CD8-positive, alpha-beta T cell (primary cell): ENCODE measurements at regions of chr17 and their contacts with region 1.

Region 1: DNA sequence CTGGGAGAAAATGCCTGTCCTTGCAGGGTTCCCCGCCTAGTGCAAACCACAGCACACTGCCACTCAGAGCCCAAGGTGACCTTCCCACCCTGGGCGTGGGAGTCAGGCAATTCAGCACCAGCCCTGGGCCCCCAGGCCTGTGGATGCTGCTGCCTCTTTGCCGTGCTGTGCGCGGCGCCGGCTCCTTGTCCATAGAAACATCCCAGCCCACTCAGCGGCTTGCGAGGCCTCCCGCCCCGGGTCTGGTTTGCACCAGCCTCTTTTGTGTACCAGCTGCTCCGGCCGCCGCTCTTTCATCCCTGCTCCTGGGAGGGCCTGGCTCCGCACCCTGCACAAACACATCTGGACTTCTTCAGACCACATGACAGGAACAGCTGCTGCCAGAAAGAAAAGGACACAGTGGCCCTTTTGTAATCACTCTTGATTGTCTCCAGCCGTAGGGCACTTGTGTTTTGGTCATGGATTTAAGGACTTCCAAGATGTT is 75.4 kb upstream of the SDK2 start:
- DNase-seq: no peak
- ATAC-seq: no peak
- H3K4me3 ChIP-seq: no peak overlapping the region
- H3K4me3 Mint-ChIP-seq: peak overlapping the region; percentile 35
- H3K27ac ChIP-seq: no peak overlapping the region
- H3K27ac Mint-ChIP-seq: peak overlapping the region; percentile 89
- H3K4me1 ChIP-seq: peaks cover 48% of the 10 kb centered on the region
- H3K4me1 Mint-ChIP-seq: peaks cover 48% of the 10 kb centered on the region
- H3K27me3 ChIP-seq: no peaks in the 10 kb centered on the region
- H3K27me3 Mint-ChIP-seq: no peaks in the 10 kb centered on the region
- CTCF ChIP-seq: no peak

Region 2: GRCh38 chr17:72580321-72581127 is 1139.1 kb before region 1 on chr17:
- CTCF ChIA-PET with region 1: no interaction called
- POLR2A ChIA-PET with region 1: no interaction called
- intact Hi-C with region 1: loop called in 1 of 2 experiments (anchors 5 kb)
- DNase-seq: no peak
- ATAC-seq: no peak
- H3K4me3 ChIP-seq: no peak overlapping the region
- H3K4me3 Mint-ChIP-seq: no peak overlapping the region
- H3K27ac ChIP-seq: no peak overlapping the region
- H3K27ac Mint-ChIP-seq: no peak overlapping the region
- H3K4me1 ChIP-seq: no peaks in the 10 kb centered on the region
- H3K4me1 Mint-ChIP-seq: no peaks in the 10 kb centered on the region
- H3K27me3 ChIP-seq: no peaks in the 10 kb centered on the region
- H3K27me3 Mint-ChIP-seq: peaks cover 18% of the 10 kb centered on the region
- CTCF ChIP-seq: no peak

Region 3: GRCh38 chr17:73841431-73842060 is 121.9 kb after region 1 on chr17:
- CTCF ChIA-PET with region 1: no interaction called
- POLR2A ChIA-PET with region 1: no interaction called
- intact Hi-C with region 1: loop called in 1 of 2 experiments (anchors 5 kb)
- DNase-seq: peak in 2 of 9 experiments; percentile 30 to 56
- ATAC-seq: peak; percentile 51
- H3K4me3 ChIP-seq: no peak overlapping the region
- H3K4me3 Mint-ChIP-seq: no peak overlapping the region
- H3K27ac ChIP-seq: no peak overlapping the region
- H3K27ac Mint-ChIP-seq: no peak overlapping the region
- H3K4me1 ChIP-seq: no peaks in the 10 kb centered on the region
- H3K4me1 Mint-ChIP-seq: peaks cover 3% of the 10 kb centered on the region
- H3K27me3 ChIP-seq: no peaks in the 10 kb centered on the region
- H3K27me3 Mint-ChIP-seq: no peaks in the 10 kb centered on the region
- CTCF ChIP-seq: peak; percentile 18